PC-9 (cell line): ENCODE measurements at regions of chr2 and their contacts with region 1.

Region 1: GRCh38 chr2:222707689-222708525 is 36.4 kb downstream of the MOGAT1 start:
- DNase-seq: peak; percentile 80 to 90
- H3K4me3 ChIP-seq: no peak overlapping the region
- H3K27ac ChIP-seq: peak overlapping the region; percentile 20
- H3K4me1 ChIP-seq: peaks cover 13% of the 10 kb centered on the region; the same call in 1 of the 2 replicates
- H3K27me3 ChIP-seq: no peaks in the 10 kb centered on the region
- CTCF ChIP-seq: peak; percentile 100

Region 2: DNA sequence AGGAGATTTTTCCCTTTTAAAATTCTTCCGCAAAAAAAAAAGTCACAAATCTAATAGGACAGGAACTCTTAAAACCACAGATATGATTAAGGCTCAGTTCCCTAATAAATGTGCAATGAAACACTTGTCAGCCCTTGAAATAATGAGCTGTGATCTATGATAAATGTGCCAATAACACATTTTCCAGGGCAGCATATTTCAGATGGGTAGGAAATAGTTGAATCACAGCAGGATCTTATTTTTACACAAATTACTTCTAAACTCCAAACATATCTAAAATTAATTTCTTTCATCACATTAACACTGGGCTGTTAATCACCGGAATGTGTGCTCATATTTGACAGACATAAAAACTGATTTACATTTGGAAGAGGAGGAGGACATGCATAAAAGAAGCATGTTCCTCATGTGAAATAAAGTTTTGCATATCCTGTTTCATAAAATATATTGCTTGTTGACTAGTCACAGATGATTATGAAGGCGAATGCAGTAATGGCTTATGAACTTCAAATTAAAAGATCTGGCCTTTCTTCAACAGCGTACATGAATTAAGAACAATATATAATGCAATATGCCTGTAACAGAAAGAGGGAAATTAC is 690.6 kb before region 1 on chr2:
- CTCF ChIA-PET with region 1: no interaction called
- POLR2A ChIA-PET with region 1: no interaction called
- intact Hi-C with region 1: no loop called
- DNase-seq: no peak
- H3K4me3 ChIP-seq: no peak overlapping the region
- H3K27ac ChIP-seq: no peak overlapping the region
- H3K4me1 ChIP-seq: no peaks in the 10 kb centered on the region
- H3K27me3 ChIP-seq: no peaks in the 10 kb centered on the region
- CTCF ChIP-seq: no peak

Region 3: DNA sequence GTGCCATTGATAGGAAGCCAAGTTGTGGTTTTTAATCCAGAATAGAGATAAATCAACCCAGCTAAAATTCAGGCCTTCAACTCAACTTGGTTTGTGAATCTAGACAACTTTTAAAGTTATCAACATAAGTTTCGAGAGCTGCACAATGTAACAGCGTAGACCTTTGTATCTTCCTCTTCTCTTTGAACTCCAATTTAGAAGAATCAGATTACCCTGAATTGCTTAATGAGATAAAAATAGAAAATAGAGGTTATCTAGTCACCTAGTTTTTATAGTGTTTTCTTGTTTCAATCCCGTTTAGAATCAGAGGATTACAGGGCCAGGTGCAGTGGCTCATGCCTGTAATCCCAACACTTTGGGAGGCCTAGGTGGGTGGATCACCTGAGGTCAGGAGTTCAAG is 24.1 kb before region 1 on chr2:
- CTCF ChIA-PET with region 1: no interaction called
- POLR2A ChIA-PET with region 1: no interaction called
- intact Hi-C with region 1: no loop called
- DNase-seq: peak in 1 of 2 experiments; percentile 22
- H3K4me3 ChIP-seq: no peak overlapping the region
- H3K27ac ChIP-seq: no peak overlapping the region
- H3K4me1 ChIP-seq: no peaks in the 10 kb centered on the region
- H3K27me3 ChIP-seq: no peaks in the 10 kb centered on the region
- CTCF ChIP-seq: no peak

Region 4: DNA sequence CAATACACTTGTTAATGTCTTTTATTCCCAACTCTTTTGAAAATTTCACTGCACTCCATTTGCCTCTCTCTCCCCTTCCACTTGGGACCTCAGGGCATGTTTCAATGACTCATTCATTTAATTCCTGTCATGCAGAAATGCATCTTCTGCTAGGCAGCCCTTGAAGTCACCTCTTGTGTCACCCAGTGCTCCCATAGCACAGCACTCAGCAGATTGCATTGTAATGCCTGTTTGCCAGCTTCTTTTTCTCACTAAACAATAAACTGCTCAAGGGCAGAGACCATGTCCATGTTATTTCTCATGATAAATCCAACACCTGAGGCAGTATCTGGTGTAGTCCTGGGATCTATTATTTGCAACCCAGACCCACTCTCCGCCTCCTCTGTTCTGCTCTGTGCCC is 67.1 kb after region 1 on chr2:
- CTCF ChIA-PET with region 1: no interaction called
- POLR2A ChIA-PET with region 1: no interaction called
- intact Hi-C with region 1: loop called (anchors 1 kb)
- DNase-seq: peak; percentile 76 to 98
- H3K4me3 ChIP-seq: no peak overlapping the region
- H3K27ac ChIP-seq: peak overlapping the region; percentile 62
- H3K4me1 ChIP-seq: peaks cover 20% of the 10 kb centered on the region
- H3K27me3 ChIP-seq: no peaks in the 10 kb centered on the region
- CTCF ChIP-seq: no peak

Region 5: DNA sequence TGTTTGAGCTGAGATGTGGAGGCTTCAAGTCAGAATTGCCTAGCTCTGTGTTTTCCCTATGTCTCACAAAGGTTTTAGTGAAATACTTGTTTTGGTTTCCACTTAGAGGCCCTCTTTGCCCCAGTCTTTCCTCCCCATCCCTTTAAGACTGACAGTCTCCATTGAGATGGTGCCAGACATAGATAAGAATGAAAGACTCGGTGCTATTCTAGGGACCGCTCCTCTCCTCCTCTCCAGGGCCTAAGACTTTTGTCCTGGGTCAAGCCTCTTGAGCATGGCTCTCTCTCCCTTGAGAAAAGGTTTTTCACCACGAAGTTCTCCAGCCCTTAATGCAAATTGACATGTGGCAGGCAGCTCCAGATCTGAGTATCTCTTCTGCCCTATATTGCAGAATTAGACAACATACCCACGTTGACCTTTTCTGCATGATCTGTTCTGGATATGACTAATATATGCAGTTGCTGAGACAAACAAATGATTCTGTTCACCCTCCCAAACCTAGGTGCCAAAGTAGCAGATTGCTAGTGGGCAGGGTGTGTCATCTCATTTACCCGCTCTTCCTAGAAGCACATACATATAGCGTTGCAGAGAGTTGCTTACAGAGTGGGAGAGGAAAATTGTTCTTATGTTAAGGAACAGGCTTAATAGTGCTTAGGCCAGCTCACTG is 105.4 kb after region 1 on chr2:
- CTCF ChIA-PET with region 1: interaction called, 12 read pairs
- POLR2A ChIA-PET with region 1: interaction called, 11 read pairs
- intact Hi-C with region 1: no loop called
- DNase-seq: peak in 1 of 2 experiments; percentile 89
- H3K4me3 ChIP-seq: no peak overlapping the region
- H3K27ac ChIP-seq: 0 out of 2 replicates have a peak overlapping the region, but pooled peaks have one; percentile 2
- H3K4me1 ChIP-seq: peaks cover 20% of the 10 kb centered on the region
- H3K27me3 ChIP-seq: no peaks in the 10 kb centered on the region
- CTCF ChIP-seq: no peak

Region 6: DNA sequence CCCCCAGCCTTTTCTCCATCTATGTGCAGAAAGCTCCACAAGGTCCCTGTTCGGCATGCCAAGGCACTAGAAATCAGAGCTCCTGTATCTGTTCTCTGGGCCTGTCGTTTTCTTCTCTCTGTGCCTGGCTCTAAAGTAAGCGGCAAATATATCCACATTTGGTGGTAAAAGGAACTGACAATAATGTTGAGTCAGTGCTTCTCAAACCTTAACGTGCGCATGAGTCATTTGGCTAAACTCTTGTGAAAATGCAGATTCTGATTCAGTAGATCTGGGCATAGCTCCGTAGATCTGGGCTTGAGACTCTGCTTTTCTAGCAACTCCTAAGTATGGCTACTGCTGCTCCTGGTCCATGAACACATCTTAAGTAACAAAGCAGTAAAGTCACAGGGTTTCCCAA is 136.4 kb after region 1 on chr2:
- CTCF ChIA-PET with region 1: interaction called, 10 read pairs
- POLR2A ChIA-PET with region 1: interaction called, 3 read pairs
- intact Hi-C with region 1: no loop called
- DNase-seq: peak in 1 of 2 experiments; percentile 79
- H3K4me3 ChIP-seq: peak overlapping the region; percentile 6; the same call in 1 of the 2 replicates
- H3K27ac ChIP-seq: peak overlapping the region; percentile 64
- H3K4me1 ChIP-seq: peaks cover 88% of the 10 kb centered on the region
- H3K27me3 ChIP-seq: no peaks in the 10 kb centered on the region
- CTCF ChIP-seq: no peak

Region 7: GRCh38 chr2:222878877-222879603 is 171.1 kb after region 1 on chr2:
- CTCF ChIA-PET with region 1: interaction called, 4 read pairs
- POLR2A ChIA-PET with region 1: interaction called, 6 read pairs
- intact Hi-C with region 1: loop called (anchors 1 kb)
- DNase-seq: peak; percentile 79 to 99
- H3K4me3 ChIP-seq: no peak overlapping the region
- H3K27ac ChIP-seq: peak overlapping the region; percentile 69
- H3K4me1 ChIP-seq: peaks cover 88% of the 10 kb centered on the region
- H3K27me3 ChIP-seq: no peaks in the 10 kb centered on the region
- CTCF ChIP-seq: no peak

Region 8: GRCh38 chr2:222939208-222939856 is 231.4 kb after region 1 on chr2:
- CTCF ChIA-PET with region 1: interaction called, 16 read pairs
- POLR2A ChIA-PET with region 1: no interaction called
- intact Hi-C with region 1: loop called (anchors 1 kb)
- DNase-seq: peak; percentile 69 to 81
- H3K4me3 ChIP-seq: no peak overlapping the region
- H3K27ac ChIP-seq: peak overlapping the region; percentile 0; the same call in 1 of the 2 replicates
- H3K4me1 ChIP-seq: peaks cover 33% of the 10 kb centered on the region
- H3K27me3 ChIP-seq: no peaks in the 10 kb centered on the region
- CTCF ChIP-seq: peak; percentile 99

Region 9: DNA sequence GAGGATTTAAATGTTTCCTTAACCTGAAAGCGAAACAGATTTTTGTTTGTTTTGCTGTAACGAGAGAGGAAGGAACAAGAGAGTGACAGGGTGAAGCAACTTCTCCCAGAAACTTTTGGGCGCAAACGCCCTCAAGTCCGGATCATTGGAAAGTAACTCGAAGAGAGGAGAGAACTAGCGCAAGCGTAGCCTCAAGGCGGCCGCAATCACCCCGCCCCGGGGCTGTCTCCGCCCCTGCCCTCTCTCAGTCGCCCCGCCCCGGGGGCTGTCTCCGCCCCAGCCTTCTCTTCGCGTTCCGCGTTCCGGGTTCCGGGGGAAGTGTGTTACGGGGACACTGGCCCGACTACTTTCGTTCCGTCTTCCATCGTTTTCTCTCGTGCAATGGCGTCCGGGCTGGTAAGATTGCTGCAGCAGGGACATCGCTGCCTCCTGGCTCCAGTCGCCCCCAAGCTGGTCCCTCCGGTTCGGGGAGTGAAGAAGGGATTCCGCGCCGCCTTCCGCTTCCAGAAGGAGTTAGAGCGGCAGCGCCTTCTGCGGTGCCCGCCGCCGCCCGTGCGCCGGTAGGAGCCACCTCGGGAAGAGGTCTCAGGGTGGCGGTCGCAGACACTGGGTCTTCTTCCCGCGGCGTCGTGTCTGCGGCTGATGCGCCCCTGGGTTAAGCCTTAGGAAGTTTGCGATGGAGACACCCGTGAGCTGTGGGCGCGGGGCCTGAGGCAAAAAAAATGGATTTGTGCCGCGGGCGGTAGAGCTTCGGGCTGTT is 1249.4 kb after region 1 on chr2 and contains the start of gene MRPL44:
- CTCF ChIA-PET with region 1: no interaction called
- POLR2A ChIA-PET with region 1: no interaction called
- intact Hi-C with region 1: loop called (anchors 10 kb)
- DNase-seq: peak; percentile 92 to 100
- H3K4me3 ChIP-seq: peak within 1 kb of the TSS; percentile 81
- H3K27ac ChIP-seq: peak within 1 kb of the TSS; percentile 73
- H3K4me1 ChIP-seq: peaks cover 37% of the 10 kb centered on the region
- H3K27me3 ChIP-seq: no peaks in the 10 kb centered on the region
- CTCF ChIP-seq: 0 out of 2 replicates have a peak, but pooled peaks have one; percentile 7
- total RNA-seq, gene MRPL44: 66.4 and 76.6 TPM in 2 replicates